ENCODE measurements at regions of chr19 and their contacts with region 1.

Region 1: GRCh38 chr19:40798223-40798996 is 581 bp upstream of the EGLN2 start:
- DNase-seq: peak; percentile 100
- H3K4me3 Mint-ChIP-seq: peak overlapping the region; percentile 87
- H3K27ac Mint-ChIP-seq: peak overlapping the region; percentile 92
- H3K4me1 Mint-ChIP-seq: peaks cover 56% of the 10 kb centered on the region
- H3K27me3 Mint-ChIP-seq: no peaks in the 10 kb centered on the region

Region 2: DNA sequence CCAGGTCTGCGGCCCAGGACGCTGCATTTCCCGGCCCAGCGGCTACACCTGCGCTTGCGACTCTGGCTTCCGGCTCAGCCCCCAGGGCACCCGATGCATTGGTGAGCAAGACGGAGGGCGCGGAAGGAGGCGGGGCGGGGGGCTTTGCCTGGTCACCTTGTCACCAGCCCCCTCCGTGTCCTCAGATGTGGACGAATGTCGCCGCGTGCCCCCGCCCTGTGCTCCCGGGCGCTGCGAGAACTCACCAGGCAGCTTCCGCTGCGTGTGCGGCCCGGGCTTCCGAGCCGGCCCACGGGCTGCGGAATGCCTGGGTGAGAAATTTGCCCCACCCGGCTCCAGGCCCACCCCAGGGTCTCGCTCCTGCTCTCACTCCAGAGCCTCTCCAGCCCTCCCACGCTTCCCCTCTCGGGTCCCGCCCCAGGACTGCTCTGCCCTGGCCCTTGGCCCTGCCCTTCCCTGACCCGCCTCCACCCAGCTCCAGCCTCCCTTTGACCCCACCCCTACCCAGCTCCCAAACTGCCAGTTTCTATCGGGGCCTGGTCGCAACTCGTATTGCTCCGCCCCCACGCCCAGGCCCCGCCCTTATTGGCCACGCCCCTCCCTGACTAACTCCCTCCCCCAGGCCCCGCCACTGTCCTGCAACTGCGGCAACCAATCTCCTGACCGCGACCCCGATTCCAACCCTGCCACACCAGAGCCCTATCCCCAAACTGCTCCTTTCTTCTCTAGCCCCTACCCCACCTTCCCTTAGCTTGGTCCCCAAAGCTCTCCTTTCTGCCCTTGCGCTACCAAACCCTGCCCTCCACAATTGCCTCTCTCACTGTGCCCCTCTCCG is 188.6 kb before region 1 on chr19:
- intact Hi-C with region 1: loop called (anchors 1 kb)
- DNase-seq: peak; percentile 86
- H3K4me3 Mint-ChIP-seq: peak overlapping the region; percentile 81
- H3K27ac Mint-ChIP-seq: peak overlapping the region; percentile 86
- H3K4me1 Mint-ChIP-seq: peaks cover 44% of the 10 kb centered on the region
- H3K27me3 Mint-ChIP-seq: no peaks in the 10 kb centered on the region

Region 3: GRCh38 chr19:40690693-40691420 is 107.6 kb before region 1 on chr19:
- intact Hi-C with region 1: loop called (anchors 1 kb)
- DNase-seq: peak; percentile 80
- H3K4me3 Mint-ChIP-seq: peak overlapping the region; percentile 87
- H3K27ac Mint-ChIP-seq: peak overlapping the region; percentile 84
- H3K4me1 Mint-ChIP-seq: no peaks in the 10 kb centered on the region
- H3K27me3 Mint-ChIP-seq: no peaks in the 10 kb centered on the region

Region 4: GRCh38 chr19:40716655-40717324 is 81.6 kb before region 1 on chr19 and contains the starts of genes COQ8B and ITPKC:
- intact Hi-C with region 1: loop called (anchors 1 kb)
- DNase-seq: peak; percentile 100
- H3K4me3 Mint-ChIP-seq: peak within 1 kb of the TSS; percentile 97
- H3K27ac Mint-ChIP-seq: peak within 1 kb of the TSS; percentile 95
- H3K4me1 Mint-ChIP-seq: peaks cover 44% of the 10 kb centered on the region
- H3K27me3 Mint-ChIP-seq: no peaks in the 10 kb centered on the region
- total RNA-seq, gene COQ8B: 38.4 and 41.6 TPM in 2 replicates
- total RNA-seq, gene ITPKC: 8.7 and 9.9 TPM in 2 replicates

Measured in activated T-helper 1 cell treated with anti-CD3 and anti-CD28 coated beads, Interleukin-12 subunit alpha, Interleukin-12 subunit beta, Interleukin-2, Interleukin-4 antibody, amounts not matched to agents 30 ng/mL and 10 ng/mL and 1 ng/mL, durations not matched to agents 14 hours and 24 hours and 36 hours (primary cell).